CD4-positive, alpha-beta memory T cell (primary cell): ENCODE measurements at regions of chr1 and their contacts with region 1.

Region 1: GRCh38 chr1:6784560-6785317 is 515 bp upstream of the CAMTA1 start:
- DNase-seq: peak; percentile 89 to 100 (median 100)
- H3K4me3 ChIP-seq: peak overlapping the region; percentile 36 to 69
- H3K4me3 Mint-ChIP-seq: peak overlapping the region; percentile 86 to 98 (median 90)
- H3K27ac ChIP-seq: peak overlapping the region; percentile 84
- H3K27ac Mint-ChIP-seq: peak overlapping the region; percentile 89 to 95 (median 93)
- H3K4me1 ChIP-seq: peaks cover 39% of the 10 kb centered on the region
- H3K4me1 Mint-ChIP-seq: peaks cover 35 to 48% (median 42%) of the 10 kb centered on the region in 4 donors
- H3K27me3 ChIP-seq: no peaks in the 10 kb centered on the region
- H3K27me3 Mint-ChIP-seq: no peaks in the 10 kb centered on the region

Region 2: GRCh38 chr1:5992026-5992813 is 792.5 kb before region 1 on chr1 and contains the start of gene NPHP4:
- CTCF ChIA-PET with region 1: no interaction called
- POLR2A ChIA-PET with region 1: no interaction called
- intact Hi-C with region 1: loop called (anchors 5 kb)
- DNase-seq: peak; percentile 99
- H3K4me3 ChIP-seq: peak within 1 kb of the TSS; percentile 86 to 92
- H3K4me3 Mint-ChIP-seq: peak within 1 kb of the TSS; percentile 95 to 98 (median 96)
- H3K27ac ChIP-seq: peak within 1 kb of the TSS; percentile 96
- H3K27ac Mint-ChIP-seq: peak within 1 kb of the TSS; percentile 97 to 99 (median 98)
- H3K4me1 ChIP-seq: peaks cover 37% of the 10 kb centered on the region
- H3K4me1 Mint-ChIP-seq: peaks cover 13 to 39% (median 30%) of the 10 kb centered on the region in 4 donors
- H3K27me3 ChIP-seq: no peaks in the 10 kb centered on the region
- H3K27me3 Mint-ChIP-seq: no peaks in the 10 kb centered on the region
- total RNA-seq, gene NPHP4: 7.6 to 9.6 TPM

Region 3: GRCh38 chr1:6199298-6200187 is 585.2 kb before region 1 on chr1 and contains the start of gene RPL22:
- CTCF ChIA-PET with region 1: no interaction called
- POLR2A ChIA-PET with region 1: no interaction called
- intact Hi-C with region 1: loop called (anchors 1 kb)
- DNase-seq: peak; percentile 94 to 99 (median 97)
- H3K4me3 ChIP-seq: peak within 1 kb of the TSS; percentile 57 to 84
- H3K4me3 Mint-ChIP-seq: peak within 1 kb of the TSS; percentile 88 to 94 (median 92)
- H3K27ac ChIP-seq: peak within 1 kb of the TSS; percentile 74
- H3K27ac Mint-ChIP-seq: peak within 1 kb of the TSS; percentile 86 to 97 (median 95)
- H3K4me1 ChIP-seq: peaks cover 38% of the 10 kb centered on the region
- H3K4me1 Mint-ChIP-seq: peaks cover 31 to 53% (median 42%) of the 10 kb centered on the region in 4 donors
- H3K27me3 ChIP-seq: no peaks in the 10 kb centered on the region
- H3K27me3 Mint-ChIP-seq: peaks cover 0 to 2% of the 10 kb centered on the region in 2 donors
- total RNA-seq, gene RPL22: 491 to 503 TPM

Region 4: DNA sequence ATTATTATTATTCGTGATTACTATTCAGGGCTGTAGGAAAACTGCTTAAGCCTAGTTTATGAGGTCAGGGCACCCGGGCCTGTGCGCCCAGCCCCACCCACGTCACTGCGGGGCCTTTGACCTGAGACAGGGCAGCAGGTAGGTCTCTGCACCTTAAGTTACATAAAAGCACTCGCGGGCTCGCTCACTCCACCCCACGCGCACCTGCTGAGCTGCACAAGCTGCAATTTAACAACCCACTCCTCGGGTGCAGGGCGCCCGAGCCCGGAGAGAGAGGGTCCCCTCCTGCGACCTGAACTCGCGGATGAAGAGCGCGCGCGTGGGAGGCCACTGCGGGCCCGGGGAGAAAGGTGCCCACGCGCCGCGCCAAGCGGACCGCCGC is 549.5 kb before region 1 on chr1:
- CTCF ChIA-PET with region 1: no interaction called
- POLR2A ChIA-PET with region 1: no interaction called
- intact Hi-C with region 1: no loop called
- DNase-seq: peak in 1 of 5 donors; percentile 17
- H3K4me3 ChIP-seq: peak overlapping the region; percentile 60 to 86
- H3K4me3 Mint-ChIP-seq: peak overlapping the region; percentile 84 to 93 (median 88)
- H3K27ac ChIP-seq: peak overlapping the region; percentile 42
- H3K27ac Mint-ChIP-seq: peak overlapping the region; percentile 15 to 84 (median 57)
- H3K4me1 ChIP-seq: peaks cover 11% of the 10 kb centered on the region
- H3K4me1 Mint-ChIP-seq: peaks cover 6 to 16% (median 12%) of the 10 kb centered on the region in 4 donors
- H3K27me3 ChIP-seq: peaks cover 5% of the 10 kb centered on the region
- H3K27me3 Mint-ChIP-seq: peaks cover 3 to 9% of the 10 kb centered on the region in 2 donors

Region 5: GRCh38 chr1:6613361-6614018 is 171.2 kb before region 1 on chr1 and contains the start of gene PHF13:
- CTCF ChIA-PET with region 1: no interaction called
- POLR2A ChIA-PET with region 1: no interaction called
- intact Hi-C with region 1: loop called (anchors 10 kb)
- DNase-seq: peak; percentile 98 to 99 (median 99)
- H3K4me3 ChIP-seq: peak within 1 kb of the TSS; percentile 20 to 46
- H3K4me3 Mint-ChIP-seq: peak within 1 kb of the TSS; percentile 91 to 97 (median 93)
- H3K27ac ChIP-seq: peak within 1 kb of the TSS; percentile 65
- H3K27ac Mint-ChIP-seq: peak within 1 kb of the TSS; percentile 86 to 94 (median 92)
- H3K4me1 ChIP-seq: peaks cover 23% of the 10 kb centered on the region
- H3K4me1 Mint-ChIP-seq: peaks cover 15 to 31% (median 25%) of the 10 kb centered on the region in 4 donors
- H3K27me3 ChIP-seq: no peaks in the 10 kb centered on the region
- H3K27me3 Mint-ChIP-seq: no peaks in the 10 kb centered on the region
- total RNA-seq, gene PHF13: 13.1 to 14.7 TPM

Region 6: GRCh38 chr1:6701437-6702153 is 83.1 kb before region 1 on chr1 and contains the start of gene DNAJC11:
- CTCF ChIA-PET with region 1: interaction called, 3 read pairs
- POLR2A ChIA-PET with region 1: interaction called, 5 read pairs
- intact Hi-C with region 1: loop called (anchors 1 kb)
- DNase-seq: peak; percentile 88 to 96 (median 93)
- H3K4me3 ChIP-seq: peak within 1 kb of the TSS; percentile 61 to 81
- H3K4me3 Mint-ChIP-seq: peak within 1 kb of the TSS; percentile 93 to 97 (median 94)
- H3K27ac ChIP-seq: peak within 1 kb of the TSS; percentile 84
- H3K27ac Mint-ChIP-seq: peak within 1 kb of the TSS; percentile 85 to 98 (median 96)
- H3K4me1 ChIP-seq: peaks cover 22% of the 10 kb centered on the region
- H3K4me1 Mint-ChIP-seq: peaks cover 15 to 31% (median 26%) of the 10 kb centered on the region in 4 donors
- H3K27me3 ChIP-seq: no peaks in the 10 kb centered on the region
- H3K27me3 Mint-ChIP-seq: no peaks in the 10 kb centered on the region
- total RNA-seq, gene DNAJC11: 40.5 to 41.6 TPM

Region 7: GRCh38 chr1:6743189-6744101 is 41.3 kb before region 1 on chr1:
- CTCF ChIA-PET with region 1: no interaction called
- POLR2A ChIA-PET with region 1: interaction called, 13 read pairs
- intact Hi-C with region 1: loop called (anchors 1 kb)
- DNase-seq: peak; percentile 11 to 52 (median 35)
- H3K4me3 ChIP-seq: no peak overlapping the region
- H3K4me3 Mint-ChIP-seq: no peak overlapping the region
- H3K27ac ChIP-seq: no peak overlapping the region
- H3K27ac Mint-ChIP-seq: peak overlapping the region in 1 of 7 donors; percentile 73
- H3K4me1 ChIP-seq: no peaks in the 10 kb centered on the region
- H3K4me1 Mint-ChIP-seq: peaks cover 1 to 11% (median 7%) of the 10 kb centered on the region in 4 donors
- H3K27me3 ChIP-seq: no peaks in the 10 kb centered on the region
- H3K27me3 Mint-ChIP-seq: peaks cover 5 to 11% of the 10 kb centered on the region in 2 donors

Region 8: DNA sequence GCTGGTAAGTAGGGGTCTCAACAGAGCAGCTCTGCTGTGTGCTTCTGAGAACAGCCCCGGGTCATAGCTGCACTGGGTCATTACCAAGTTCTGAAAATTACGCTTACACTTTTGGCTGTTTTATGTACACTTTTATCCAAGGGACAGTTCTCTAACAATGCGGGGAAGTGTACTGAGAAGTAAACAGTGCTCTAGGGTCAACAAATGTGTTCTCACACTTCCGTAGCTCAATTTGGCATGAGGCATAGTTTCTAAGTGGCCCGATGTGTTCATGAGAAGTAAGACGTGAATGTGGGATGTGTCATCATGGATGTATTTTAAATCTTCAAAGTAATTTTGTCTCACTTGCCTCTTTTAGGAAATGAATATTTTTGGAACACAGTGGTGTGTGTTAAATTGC is 975.5 kb after region 1 on chr1:
- CTCF ChIA-PET with region 1: no interaction called
- POLR2A ChIA-PET with region 1: no interaction called
- intact Hi-C with region 1: loop called (anchors 10 kb)
- DNase-seq: no peak
- H3K4me3 ChIP-seq: no peak overlapping the region
- H3K4me3 Mint-ChIP-seq: no peak overlapping the region
- H3K27ac ChIP-seq: no peak overlapping the region
- H3K27ac Mint-ChIP-seq: no peak overlapping the region
- H3K4me1 ChIP-seq: no peaks in the 10 kb centered on the region
- H3K4me1 Mint-ChIP-seq: no peaks in the 10 kb centered on the region
- H3K27me3 ChIP-seq: no peaks in the 10 kb centered on the region
- H3K27me3 Mint-ChIP-seq: peaks cover 6 to 10% of the 10 kb centered on the region in 2 donors